ENCODE measurements at regions of chr1 and their contacts with region 1.

Region 1: GRCh38 chr1:197180252-197180878 is 33.9 kb upstream of the ASPM start:
- DNase-seq: peak; percentile 64
- H3K4me3 ChIP-seq: no peak overlapping the region
- H3K27ac ChIP-seq: no peak overlapping the region
- H3K4me1 ChIP-seq: no peaks in the 10 kb centered on the region
- H3K27me3 ChIP-seq: no peaks in the 10 kb centered on the region
- CTCF ChIP-seq: peak; percentile 71

Region 2: DNA sequence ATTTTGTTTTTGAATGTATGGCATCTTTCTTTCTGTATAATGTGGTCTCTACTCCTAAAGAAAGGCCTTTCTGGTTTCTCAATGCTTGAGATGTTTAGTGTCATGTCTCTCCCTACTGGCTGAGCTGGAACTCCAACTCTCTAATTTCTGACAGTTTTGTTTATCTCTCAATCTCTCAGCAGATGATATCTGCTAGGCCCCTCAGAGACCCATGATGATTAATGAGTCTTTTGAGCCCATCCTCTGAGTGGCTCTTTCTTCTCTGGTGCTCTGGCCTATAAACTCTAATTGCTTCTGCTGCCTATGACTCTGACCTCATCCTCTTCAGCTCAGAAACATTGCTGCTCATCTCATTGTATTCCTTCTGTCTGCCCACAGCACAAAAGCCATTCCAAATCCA is 134.3 kb after region 1 on chr1:
- CTCF ChIA-PET with region 1: no interaction called
- POLR2A ChIA-PET with region 1: no interaction called
- intact Hi-C with region 1: no loop called
- DNase-seq: peak; percentile 36
- H3K4me3 ChIP-seq: no peak overlapping the region
- H3K27ac ChIP-seq: no peak overlapping the region
- H3K4me1 ChIP-seq: no peaks in the 10 kb centered on the region
- H3K27me3 ChIP-seq: no peaks in the 10 kb centered on the region
- CTCF ChIP-seq: peak; percentile 32; the same call in 1 of the 2 replicates

Region 3: GRCh38 chr1:197339106-197340060 is 159.0 kb after region 1 on chr1:
- CTCF ChIA-PET with region 1: no interaction called
- POLR2A ChIA-PET with region 1: no interaction called
- intact Hi-C with region 1: loop called (anchors 1 kb)
- DNase-seq: no peak
- H3K4me3 ChIP-seq: no peak overlapping the region
- H3K27ac ChIP-seq: no peak overlapping the region
- H3K4me1 ChIP-seq: no peaks in the 10 kb centered on the region
- H3K27me3 ChIP-seq: no peaks in the 10 kb centered on the region
- CTCF ChIP-seq: no peak

Measured in A673 (cell line).